ENCODE measurements at regions of chr12 and their contacts with region 1.

Region 1: GRCh38 chr12:54958048-54958658 is 26.4 kb downstream of the TESPA1 start:
- DNase-seq: peak; percentile 16 to 27
- H3K4me3 ChIP-seq: no peak overlapping the region
- H3K27ac ChIP-seq: no peak overlapping the region
- H3K4me1 ChIP-seq: peaks cover 0 to 12% of the 10 kb centered on the region in 2 donors
- H3K27me3 ChIP-seq: no peaks in the 10 kb centered on the region
- CTCF ChIP-seq: peak; percentile 16 to 82 (median 60)
- POLR2A ChIP-seq: no peak

Region 2: DNA sequence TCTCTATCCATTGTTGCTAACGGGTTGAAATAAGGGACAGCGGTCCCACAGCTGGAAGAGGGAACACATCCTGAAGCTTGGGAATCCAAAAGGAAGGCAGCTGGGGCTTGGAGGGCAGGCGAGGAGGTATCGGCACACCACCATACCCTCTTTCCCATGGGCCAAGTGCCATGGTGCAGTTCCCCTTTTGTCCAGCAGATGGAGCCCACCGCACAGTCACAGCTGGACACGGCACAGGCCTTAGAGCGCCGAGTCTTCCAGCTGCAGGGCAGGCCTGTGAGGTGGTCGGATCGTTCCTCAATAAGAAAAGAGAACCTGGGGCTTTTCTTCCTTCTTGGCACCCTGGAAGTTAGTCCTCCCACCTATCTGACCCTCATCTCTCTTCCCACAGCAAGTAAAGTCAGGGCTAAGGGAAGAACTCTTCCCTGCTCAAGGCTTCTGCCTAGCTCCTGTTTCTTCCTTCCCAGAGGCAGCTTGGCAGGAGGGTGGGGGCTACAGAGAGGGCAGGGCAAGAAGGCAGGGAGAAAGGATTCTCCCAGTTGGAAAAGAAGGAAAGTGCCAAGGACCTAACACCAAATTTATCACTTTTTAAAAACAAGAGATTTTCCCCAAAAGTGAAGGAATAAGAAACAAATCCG is 378.3 kb before region 1 on chr12:
- intact Hi-C with region 1: loop called (anchors 5 kb)
- DNase-seq: peak; percentile 78 to 84
- H3K4me3 ChIP-seq: no peak overlapping the region
- H3K27ac ChIP-seq: no peak overlapping the region
- H3K4me1 ChIP-seq: no peaks in the 10 kb centered on the region
- H3K27me3 ChIP-seq: no peaks in the 10 kb centered on the region
- CTCF ChIP-seq: peak; percentile 91 to 100 (median 98)
- POLR2A ChIP-seq: no peak

Region 3: DNA sequence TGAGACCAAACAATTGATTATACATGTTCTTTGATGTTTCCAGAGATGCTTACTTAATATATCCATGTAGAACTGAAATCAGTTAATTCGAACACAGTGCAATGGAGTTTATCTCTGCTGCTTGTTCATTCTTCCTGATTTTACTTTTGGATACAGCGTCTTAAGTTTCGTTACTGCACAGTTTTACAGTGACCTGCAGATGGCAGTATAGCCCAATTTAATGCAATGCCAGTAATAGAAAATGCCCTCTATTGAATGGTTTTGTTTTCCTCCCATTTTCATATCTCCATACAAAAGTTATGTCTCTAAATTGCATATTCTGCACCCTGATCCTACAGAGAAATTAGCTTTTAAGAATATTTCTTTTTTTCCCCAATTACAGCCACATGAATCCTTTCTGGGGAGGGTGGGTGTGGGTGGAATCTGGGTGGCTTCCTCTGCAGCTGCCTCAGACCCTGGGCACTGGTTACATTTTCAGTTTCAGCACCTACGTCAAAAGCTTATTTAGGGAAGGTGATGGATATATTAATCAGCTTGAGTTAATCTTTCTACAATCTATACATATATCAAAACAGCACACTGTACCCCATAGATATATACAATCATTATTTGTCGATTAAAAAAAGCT is 208.8 kb before region 1 on chr12:
- intact Hi-C with region 1: loop called (anchors 5 kb)
- DNase-seq: peak in 1 of 2 donors; percentile 6
- H3K4me3 ChIP-seq: no peak overlapping the region
- H3K27ac ChIP-seq: no peak overlapping the region
- H3K4me1 ChIP-seq: no peaks in the 10 kb centered on the region
- H3K27me3 ChIP-seq: no peaks in the 10 kb centered on the region
- CTCF ChIP-seq: peak; percentile 33 to 79 (median 64)
- POLR2A ChIP-seq: no peak

Region 4: DNA sequence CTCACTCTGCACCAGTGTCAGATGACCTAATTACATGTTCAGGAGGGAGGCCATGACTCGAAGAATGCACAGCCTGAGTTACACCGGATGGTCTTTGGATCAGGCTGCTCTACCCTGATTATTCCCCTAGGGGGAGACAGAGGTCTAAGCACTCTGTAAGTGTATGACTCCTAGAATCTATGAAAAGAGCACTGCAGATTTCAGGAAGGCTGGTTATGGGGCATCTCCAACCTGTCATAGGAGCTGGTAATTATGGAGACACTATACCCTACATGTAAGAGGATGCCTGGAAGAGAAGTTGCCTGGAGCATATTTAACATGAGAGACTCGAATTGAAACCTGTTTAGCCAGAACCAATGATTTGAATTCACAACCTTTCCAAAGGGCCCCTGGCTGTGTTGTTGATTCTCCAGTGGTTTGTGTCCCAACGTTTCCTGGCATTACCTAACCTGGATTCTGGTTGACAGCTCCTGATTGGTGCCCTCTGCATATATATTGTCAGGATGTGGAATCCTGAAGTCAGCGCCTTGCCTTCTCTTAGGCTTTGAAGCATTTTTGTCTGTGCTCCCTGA is 104.1 kb before region 1 on chr12 and contains the start of gene MUCL1:
- intact Hi-C with region 1: loop called (anchors 10 kb)
- DNase-seq: peak; percentile 12 to 24
- H3K4me3 ChIP-seq: no peak within 1 kb of the TSS
- H3K27ac ChIP-seq: no peak within 1 kb of the TSS
- H3K4me1 ChIP-seq: no peaks in the 10 kb centered on the region
- H3K27me3 ChIP-seq: no peaks in the 10 kb centered on the region
- CTCF ChIP-seq: peak; percentile 13 to 66 (median 55)
- POLR2A ChIP-seq: no peak
- total RNA-seq, gene MUCL1: not detected

Measured in thyroid gland (tissue), 4 donors.